Activated CD8-positive, alpha-beta T cell treated with anti-CD3 and anti-CD28 coated beads for 36 hours (primary cell): ENCODE measurements at regions of chr5 and their contacts with region 1.

Region 1: GRCh38 chr5:175718401-175719108 is 60.7 kb downstream of the HRH2 start:
- DNase-seq: peak; percentile 91
- ATAC-seq: peak; percentile 79
- H3K4me3 Mint-ChIP-seq: no peak overlapping the region
- H3K27ac Mint-ChIP-seq: no peak overlapping the region
- H3K4me1 Mint-ChIP-seq: peaks cover 5% of the 10 kb centered on the region
- H3K27me3 Mint-ChIP-seq: no peaks in the 10 kb centered on the region
- CTCF ChIP-seq: peak; percentile 84

Region 2: DNA sequence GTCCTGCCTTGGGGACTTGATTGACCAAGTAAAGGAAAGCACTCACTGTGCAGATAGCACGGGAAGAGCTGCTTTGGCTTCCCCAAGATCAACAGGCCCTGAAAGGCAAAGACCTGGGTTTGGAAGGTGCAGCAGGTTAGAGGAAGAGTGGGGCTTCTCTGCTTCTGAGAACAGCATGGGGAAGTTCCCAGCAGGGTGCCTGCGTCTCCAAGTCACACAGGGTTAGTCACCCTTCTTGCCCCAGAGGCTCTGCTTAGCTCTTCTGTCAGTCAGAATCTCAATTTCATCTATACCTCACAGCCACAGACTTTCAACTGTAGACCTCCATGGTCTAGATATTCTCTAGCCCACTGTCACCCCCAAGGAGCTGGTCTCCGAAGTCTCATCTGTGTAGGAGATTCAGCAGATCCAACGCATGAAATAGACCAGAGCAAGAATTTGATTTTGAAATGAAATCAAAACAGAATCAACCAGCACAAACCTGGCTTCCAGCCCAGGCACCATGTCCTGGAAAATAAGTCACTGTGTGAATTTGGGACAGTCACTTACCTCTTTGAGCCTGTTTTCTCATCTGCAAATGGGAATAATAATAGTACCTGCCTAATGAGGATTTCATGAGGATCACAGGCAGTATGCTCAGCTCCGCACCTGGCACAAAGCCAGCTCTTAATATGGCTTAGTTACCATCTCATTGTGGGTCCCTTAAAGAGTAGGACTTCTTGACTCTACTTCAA is 176.2 kb before region 1 on chr5:
- CTCF ChIA-PET with region 1: interaction called, 29 read pairs
- POLR2A ChIA-PET with region 1: no interaction called
- intact Hi-C with region 1: no loop called
- DNase-seq: peak; percentile 72
- ATAC-seq: peak; percentile 99
- H3K4me3 Mint-ChIP-seq: no peak overlapping the region
- H3K27ac Mint-ChIP-seq: peak overlapping the region; percentile 10
- H3K4me1 Mint-ChIP-seq: peaks cover 24% of the 10 kb centered on the region
- H3K27me3 Mint-ChIP-seq: peaks cover 4% of the 10 kb centered on the region
- CTCF ChIP-seq: no peak

Region 3: GRCh38 chr5:175696139-175696854 is 22.3 kb before region 1 on chr5:
- CTCF ChIA-PET with region 1: interaction called, 21 read pairs
- POLR2A ChIA-PET with region 1: interaction called, 4 read pairs
- intact Hi-C with region 1: no loop called
- DNase-seq: peak; percentile 89
- ATAC-seq: peak; percentile 91
- H3K4me3 Mint-ChIP-seq: no peak overlapping the region
- H3K27ac Mint-ChIP-seq: peak overlapping the region; percentile 78
- H3K4me1 Mint-ChIP-seq: peaks cover 28% of the 10 kb centered on the region
- H3K27me3 Mint-ChIP-seq: no peaks in the 10 kb centered on the region
- CTCF ChIP-seq: peak; percentile 88

Region 4: DNA sequence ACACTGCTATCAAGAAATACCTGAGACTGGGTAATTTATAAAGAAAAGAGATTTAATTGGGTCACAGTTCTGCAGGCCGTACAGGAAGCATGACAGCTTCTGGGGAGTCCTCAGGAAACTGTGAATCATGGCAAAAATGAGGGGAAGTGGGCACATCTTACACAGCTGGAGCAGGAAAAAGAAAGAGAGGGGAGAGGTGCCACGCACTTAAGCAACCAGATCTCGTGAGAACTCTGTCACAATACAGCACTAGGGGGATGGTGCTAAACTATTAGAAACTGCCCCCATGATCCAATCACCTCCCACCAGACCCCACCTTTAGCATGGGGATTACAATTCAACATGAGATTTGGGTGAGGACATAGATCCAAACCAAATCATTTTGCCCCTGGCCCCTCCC is 47.3 kb after region 1 on chr5:
- CTCF ChIA-PET with region 1: no interaction called
- POLR2A ChIA-PET with region 1: no interaction called
- intact Hi-C with region 1: no loop called
- DNase-seq: peak; percentile 32
- ATAC-seq: peak; percentile 56
- H3K4me3 Mint-ChIP-seq: no peak overlapping the region
- H3K27ac Mint-ChIP-seq: no peak overlapping the region
- H3K4me1 Mint-ChIP-seq: peaks cover 7% of the 10 kb centered on the region
- H3K27me3 Mint-ChIP-seq: peaks cover 15% of the 10 kb centered on the region
- CTCF ChIP-seq: no peak

Region 5: GRCh38 chr5:175840050-175840841 is 121.7 kb after region 1 on chr5:
- CTCF ChIA-PET with region 1: no interaction called
- POLR2A ChIA-PET with region 1: no interaction called
- intact Hi-C with region 1: no loop called
- DNase-seq: no peak
- ATAC-seq: no peak
- H3K4me3 Mint-ChIP-seq: no peak overlapping the region
- H3K27ac Mint-ChIP-seq: no peak overlapping the region
- H3K4me1 Mint-ChIP-seq: no peaks in the 10 kb centered on the region
- H3K27me3 Mint-ChIP-seq: no peaks in the 10 kb centered on the region
- CTCF ChIP-seq: peak; percentile 69